ENCODE measurements at regions of chr19 and their contacts with region 1.

Region 1: GRCh38 chr19:56403764-56404704 is at the start of gene ZNF583:
- DNase-seq: peak; percentile 84 to 98 (median 95)

Region 2: GRCh38 chr19:56393119-56394012 is 10.7 kb before region 1 on chr19 and contains the start of gene ZNF582:
- intact Hi-C with region 1: loop called (anchors 1 kb)
- DNase-seq: peak; percentile 89 to 98 (median 95)

Region 3: DNA sequence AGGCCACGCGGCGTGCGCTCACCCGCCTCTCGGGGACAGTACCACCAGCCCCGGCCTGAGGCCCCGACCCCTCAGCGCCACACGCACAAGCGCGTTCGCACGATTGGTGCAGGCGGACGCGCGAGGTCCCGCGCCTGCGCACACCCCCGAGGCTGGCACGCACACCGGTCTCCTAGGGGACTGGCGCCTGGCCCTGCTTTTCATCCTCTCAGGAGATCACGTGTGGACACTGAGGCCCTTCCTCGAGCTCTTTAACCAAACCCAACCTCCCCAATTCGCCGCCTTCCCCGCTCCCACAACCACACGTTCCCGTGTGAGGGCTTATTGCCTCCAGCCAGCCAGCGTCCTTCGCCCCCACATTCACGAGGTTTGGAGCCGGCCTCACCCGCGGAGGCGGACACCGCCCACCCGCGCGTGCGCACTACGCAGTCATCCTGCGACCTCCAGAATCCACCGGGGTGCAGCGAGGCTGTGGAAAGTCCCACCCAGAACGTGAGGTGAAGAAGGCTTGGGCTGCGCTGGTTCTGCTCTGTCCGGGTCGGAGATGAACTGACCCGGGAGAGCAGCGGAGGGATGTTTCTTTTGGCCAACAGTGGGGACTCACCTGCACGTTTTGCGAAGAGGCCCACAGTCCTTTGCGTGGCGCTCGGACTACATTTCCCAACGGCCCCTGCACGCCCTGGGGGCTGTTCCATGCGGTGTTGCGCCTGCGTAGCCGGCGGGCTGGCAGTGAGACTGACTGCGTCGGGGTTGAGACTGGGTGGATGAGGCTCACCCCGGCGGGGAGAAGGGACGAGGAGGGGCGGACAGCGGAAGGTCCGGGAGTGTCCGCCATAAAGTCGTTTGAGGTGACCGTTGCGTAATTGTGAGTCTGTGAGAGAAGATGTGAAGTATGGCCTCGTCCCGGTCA is 73.7 kb after region 1 on chr19:
- intact Hi-C with region 1: loop called (anchors 10 kb)
- DNase-seq: peak; percentile 87 to 98 (median 94)

Region 4: GRCh38 chr19:56538254-56538760 is 134.3 kb after region 1 on chr19:
- intact Hi-C with region 1: loop called (anchors 10 kb)
- DNase-seq: peak; percentile 84 to 99 (median 96)